Sigmoid colon (tissue), 7 donors: ENCODE measurements at regions of chr17 and their contacts with region 1.

Region 1: DNA sequence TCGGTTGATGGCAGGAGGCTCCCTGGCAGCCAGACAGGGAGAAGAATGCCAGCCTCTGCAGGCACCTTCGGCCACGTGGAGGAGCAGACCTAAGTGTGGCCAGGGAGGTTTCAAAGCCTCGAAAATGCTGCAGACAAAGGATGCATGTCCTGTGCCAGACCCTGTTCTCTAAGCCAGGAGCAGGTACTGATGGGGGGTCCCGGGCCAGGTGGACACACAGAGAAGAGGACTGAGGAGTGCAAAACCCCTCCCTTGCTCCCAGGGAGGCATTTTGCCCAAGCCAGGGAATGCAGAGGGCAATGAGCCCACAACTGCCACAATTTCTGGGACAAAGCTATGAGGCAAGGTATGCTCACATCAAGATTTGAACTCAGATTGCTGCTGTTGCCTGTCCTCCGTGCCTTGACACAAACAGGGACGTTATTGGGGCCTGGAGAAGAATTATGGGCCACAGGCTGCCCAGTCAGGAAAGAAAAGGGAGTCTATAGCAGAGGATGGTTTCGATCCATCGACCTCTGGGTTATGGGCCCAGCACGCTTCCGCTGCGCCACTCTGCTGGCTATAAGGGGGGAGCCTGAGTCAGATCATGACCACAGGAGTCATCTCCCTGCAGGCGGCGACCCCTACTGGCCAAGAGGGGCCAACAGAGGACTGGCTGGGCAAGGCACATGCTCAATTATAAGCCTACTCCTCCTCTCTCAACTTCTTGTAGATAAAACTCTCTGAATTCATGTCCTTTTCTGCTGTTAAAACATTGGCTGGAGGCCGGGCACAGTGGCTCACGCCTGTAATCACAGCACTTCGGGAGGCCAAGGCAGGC is 25.1 kb upstream of the FOXK2 start:
- DNase-seq: peak; percentile 94
- H3K4me3 ChIP-seq: no peak overlapping the region
- H3K27ac ChIP-seq: peak overlapping the region; percentile 60 to 97 (median 94)
- H3K4me1 ChIP-seq: peaks cover 0 to 41% (median 29%) of the 10 kb centered on the region in 4 donors
- H3K27me3 ChIP-seq: no peaks in the 10 kb centered on the region
- CTCF ChIP-seq: peak; percentile 76 to 95 (median 88)
- EP300 ChIP-seq: no peak
- POLR2A ChIP-seq: no peak

Region 2: GRCh38 chr17:82407255-82407654 is 87.2 kb before region 1 on chr17:
- intact Hi-C with region 1: no loop called
- DNase-seq: no peak
- H3K4me3 ChIP-seq: no peak overlapping the region
- H3K27ac ChIP-seq: no peak overlapping the region
- H3K4me1 ChIP-seq: no peaks in the 10 kb centered on the region
- H3K27me3 ChIP-seq: no peaks in the 10 kb centered on the region
- CTCF ChIP-seq: no peak
- EP300 ChIP-seq: no peak
- POLR2A ChIP-seq: no peak

Region 3: DNA sequence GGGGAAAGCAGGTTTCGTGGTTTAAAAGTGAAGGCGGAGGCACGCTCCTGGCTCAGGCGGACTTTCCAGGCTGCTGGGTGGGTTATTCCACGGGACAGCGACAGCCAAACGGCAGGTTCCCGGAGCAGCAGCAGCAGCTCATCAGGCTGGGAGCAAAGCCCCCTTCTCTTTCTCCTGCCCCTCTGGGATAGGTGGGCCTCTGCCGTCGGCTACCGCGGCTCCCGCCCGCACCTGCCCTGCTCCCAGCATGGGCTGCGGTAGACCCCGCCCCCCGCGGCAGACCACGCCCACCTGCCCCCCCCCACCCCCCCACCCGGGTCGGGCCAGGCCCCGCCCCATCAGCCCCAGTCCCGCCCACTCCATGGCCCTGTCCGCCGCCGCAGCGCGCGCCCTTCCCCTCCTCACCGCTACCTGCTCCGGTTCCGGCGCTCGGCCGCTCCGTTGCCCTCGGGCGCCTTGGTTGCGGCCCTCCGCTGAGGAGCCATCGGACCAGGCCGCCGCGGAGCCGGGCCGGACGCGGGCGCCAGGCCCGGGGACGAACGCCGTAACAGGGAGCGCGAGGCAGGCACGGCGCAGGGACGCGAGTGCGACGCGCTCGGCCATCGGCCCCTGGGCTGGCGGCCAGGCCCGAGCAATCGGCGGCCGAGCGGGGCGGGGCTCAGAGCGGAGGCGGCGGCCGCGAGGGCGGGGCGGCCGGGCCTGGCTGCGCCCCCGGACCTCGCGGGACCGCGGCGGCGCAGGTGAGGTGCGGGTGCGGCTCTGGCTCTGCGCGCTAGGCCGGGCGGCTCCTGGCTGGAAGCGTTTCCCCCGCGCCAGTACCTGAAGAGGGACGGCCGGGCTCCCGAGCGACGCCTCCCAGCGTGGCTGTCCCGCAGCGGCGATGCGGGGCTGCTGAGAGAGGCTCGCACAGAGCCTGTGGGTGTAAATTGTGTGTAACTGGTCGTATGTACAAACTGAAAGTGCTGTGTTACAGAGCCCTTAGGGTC is 76.2 kb before region 1 on chr17 and contains the starts of genes HEXD and OGFOD3:
- intact Hi-C with region 1: no loop called
- DNase-seq: peak; percentile 86
- H3K4me3 ChIP-seq: peak within 1 kb of the TSS; percentile 55 to 77 (median 74)
- H3K27ac ChIP-seq: peak within 1 kb of the TSS; percentile 86 to 94 (median 89)
- H3K4me1 ChIP-seq: peaks cover 0 to 26% (median 12%) of the 10 kb centered on the region in 4 donors
- H3K27me3 ChIP-seq: no peaks in the 10 kb centered on the region
- CTCF ChIP-seq: no peak
- EP300 ChIP-seq: no peak
- POLR2A ChIP-seq: no peak
- total RNA-seq, gene HEXD: 15.8 to 42.9 (median 24.0) TPM
- total RNA-seq, gene OGFOD3: 14.1 to 28.2 (median 22.1) TPM

Region 4: GRCh38 chr17:82457997-82458864 is 36.2 kb before region 1 on chr17 and contains the start of gene NARF:
- intact Hi-C with region 1: loop called (anchors 2 kb)
- DNase-seq: peak; percentile 100
- H3K4me3 ChIP-seq: peak within 1 kb of the TSS; percentile 77 to 97 (median 80)
- H3K27ac ChIP-seq: peak within 1 kb of the TSS; percentile 99 to 100 (median 100)
- H3K4me1 ChIP-seq: peaks cover 0 to 23% (median 19%) of the 10 kb centered on the region in 4 donors
- H3K27me3 ChIP-seq: no peaks in the 10 kb centered on the region
- CTCF ChIP-seq: no peak
- EP300 ChIP-seq: peak in 1 of 4 donors; percentile 55
- POLR2A ChIP-seq: peak; percentile 95 to 98
- total RNA-seq, gene NARF: 34.6 to 50.4 (median 43.8) TPM

Region 5: GRCh38 chr17:82518826-82519810 is 24.7 kb after region 1 on chr17 and contains the start of gene FOXK2:
- intact Hi-C with region 1: loop called (anchors 1 kb)
- DNase-seq: peak; percentile 97
- H3K4me3 ChIP-seq: peak within 1 kb of the TSS; percentile 66 to 94 (median 78)
- H3K27ac ChIP-seq: peak within 1 kb of the TSS; percentile 91 to 99 (median 94)
- H3K4me1 ChIP-seq: peaks cover 0 to 41% (median 33%) of the 10 kb centered on the region in 4 donors
- H3K27me3 ChIP-seq: no peaks in the 10 kb centered on the region
- CTCF ChIP-seq: no peak
- EP300 ChIP-seq: peak in 3 of 4 donors; percentile 12 to 45 (median 12)
- POLR2A ChIP-seq: no peak
- total RNA-seq, gene FOXK2: 29.3 to 56.8 (median 40.5) TPM

Region 6: GRCh38 chr17:82551779-82552457 is 57.5 kb after region 1 on chr17:
- intact Hi-C with region 1: loop called (anchors 1 kb)
- DNase-seq: peak; percentile 91
- H3K4me3 ChIP-seq: no peak overlapping the region
- H3K27ac ChIP-seq: peak overlapping the region; percentile 47 to 88 (median 83)
- H3K4me1 ChIP-seq: peaks cover 0 to 87% (median 75%) of the 10 kb centered on the region in 4 donors
- H3K27me3 ChIP-seq: no peaks in the 10 kb centered on the region
- CTCF ChIP-seq: peak; percentile 71 to 76 (median 76)
- EP300 ChIP-seq: no peak
- POLR2A ChIP-seq: no peak

Region 7: GRCh38 chr17:82583720-82584234 is 89.3 kb after region 1 on chr17:
- intact Hi-C with region 1: no loop called
- DNase-seq: no peak
- H3K4me3 ChIP-seq: no peak overlapping the region
- H3K27ac ChIP-seq: no peak overlapping the region
- H3K4me1 ChIP-seq: peaks cover 0 to 27% (median 19%) of the 10 kb centered on the region in 4 donors
- H3K27me3 ChIP-seq: no peaks in the 10 kb centered on the region
- CTCF ChIP-seq: no peak
- EP300 ChIP-seq: no peak
- POLR2A ChIP-seq: no peak

Region 8: DNA sequence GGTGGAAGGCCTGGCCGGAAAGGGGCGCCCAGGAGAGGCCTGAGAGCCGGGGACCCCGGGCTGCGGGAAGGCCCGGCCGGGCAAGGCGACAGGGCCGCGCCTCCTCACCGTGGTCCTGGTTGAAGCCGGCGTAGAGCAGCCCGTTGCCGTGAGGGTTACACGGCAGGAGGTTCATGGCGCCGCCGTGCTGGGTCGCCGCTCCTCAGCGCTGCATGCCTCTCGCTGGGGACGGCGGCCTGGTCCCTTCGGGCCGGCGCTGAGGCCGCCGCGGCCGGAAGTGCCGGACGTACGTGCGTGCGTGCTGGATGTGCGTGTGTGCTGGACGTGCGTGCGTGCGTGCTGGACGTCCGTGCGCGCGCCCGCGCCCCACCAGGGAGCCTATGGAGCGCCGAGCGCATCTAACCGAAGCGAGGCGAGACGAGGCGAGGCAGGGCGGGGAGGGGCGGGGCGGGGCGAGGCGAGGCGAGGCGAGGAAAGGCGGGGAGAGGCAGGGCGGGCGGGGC is 153.8 kb after region 1 on chr17 and contains the start of gene WDR45B:
- intact Hi-C with region 1: loop called (anchors 10 kb)
- DNase-seq: peak; percentile 99
- H3K4me3 ChIP-seq: peak within 1 kb of the TSS; percentile 73 to 100 (median 98)
- H3K27ac ChIP-seq: peak within 1 kb of the TSS; percentile 91 to 100 (median 98)
- H3K4me1 ChIP-seq: peaks cover 0 to 37% (median 29%) of the 10 kb centered on the region in 4 donors
- H3K27me3 ChIP-seq: no peaks in the 10 kb centered on the region
- CTCF ChIP-seq: no peak
- EP300 ChIP-seq: peak; percentile 11 to 82 (median 46)
- POLR2A ChIP-seq: peak; percentile 93 to 94
- total RNA-seq, gene WDR45B: 51.7 to 67.0 (median 66.7) TPM

Region 9: GRCh38 chr17:82674656-82675475 is 180.4 kb after region 1 on chr17:
- intact Hi-C with region 1: no loop called
- DNase-seq: no peak
- H3K4me3 ChIP-seq: no peak overlapping the region
- H3K27ac ChIP-seq: no peak overlapping the region
- H3K4me1 ChIP-seq: no peaks in the 10 kb centered on the region
- H3K27me3 ChIP-seq: no peaks in the 10 kb centered on the region
- CTCF ChIP-seq: no peak
- EP300 ChIP-seq: no peak
- POLR2A ChIP-seq: no peak